Head of caudate nucleus (tissue), 42 donors: ENCODE measurements at regions of chr18 and their contacts with region 1.

Region 1: GRCh38 chr18:58043491-58044379 is at the start of gene NEDD4L:
- DNase-seq: peak; percentile 71 to 95 (median 86)

Region 2: DNA sequence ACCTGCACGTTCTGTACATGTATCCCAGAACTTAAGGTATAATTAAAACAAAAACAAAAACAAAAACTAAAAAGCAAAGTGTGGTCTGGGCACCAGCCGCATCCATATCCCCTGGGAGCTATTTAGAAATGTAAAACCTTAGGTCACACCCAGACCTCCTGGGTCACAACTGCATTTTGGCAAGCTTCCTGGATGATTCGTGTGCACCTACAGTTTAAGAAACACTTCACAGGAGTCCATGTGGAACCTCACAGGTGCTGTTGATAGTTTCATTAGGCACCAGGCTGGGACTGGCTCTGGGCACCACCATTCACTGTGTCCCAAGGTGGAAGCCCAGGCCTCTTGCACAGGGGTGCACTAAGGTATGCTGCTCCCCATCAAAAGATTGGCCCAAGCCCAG is 1000.5 kb before region 1 on chr18:
- intact Hi-C with region 1: no loop called
- DNase-seq: no peak

Region 3: DNA sequence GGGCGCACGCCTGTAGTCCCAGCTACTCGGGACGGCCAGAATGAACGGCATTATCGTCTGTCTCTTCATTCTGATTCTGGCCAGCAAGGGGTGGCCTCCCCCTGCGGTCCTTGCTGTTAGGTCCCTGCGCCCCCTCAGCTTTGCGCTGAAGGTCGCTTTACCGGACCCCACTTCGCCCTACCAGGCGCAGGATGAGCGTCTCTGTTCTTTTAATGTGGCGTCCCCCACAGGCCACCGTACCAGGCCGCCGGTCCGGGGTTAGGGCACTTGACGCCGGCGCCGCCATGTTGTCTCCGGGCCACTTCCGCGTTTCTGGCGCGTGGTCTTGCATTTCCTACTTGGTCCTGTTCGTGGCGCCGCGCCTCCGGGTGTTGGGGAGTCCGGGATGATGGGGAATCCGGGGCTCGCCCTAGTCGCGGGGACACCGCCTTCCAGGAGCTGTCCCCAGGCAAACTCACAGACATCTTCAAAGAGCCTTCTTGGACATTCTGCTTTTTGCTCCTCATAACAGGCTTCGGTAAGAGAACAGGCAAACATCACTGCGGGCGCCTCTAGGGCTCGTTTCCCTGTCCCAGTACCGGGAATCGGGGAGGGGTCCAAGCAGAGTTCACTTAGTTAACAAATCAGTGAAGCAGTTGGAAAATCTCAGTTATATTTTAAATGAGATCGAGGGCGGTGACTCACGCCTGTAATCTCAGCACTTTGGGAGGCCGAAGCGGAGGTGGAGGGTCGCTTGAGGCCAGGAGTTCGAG is 413.6 kb before region 1 on chr18:
- intact Hi-C with region 1: loop called (anchors 5 kb)
- DNase-seq: peak; percentile 93 to 99 (median 97)

Region 4: GRCh38 chr18:58124475-58124874 is 80.7 kb after region 1 on chr18:
- intact Hi-C with region 1: loop called (anchors 5 kb)
- DNase-seq: no peak

Region 5: GRCh38 chr18:58135701-58136331 is 92.1 kb after region 1 on chr18:
- intact Hi-C with region 1: loop called (anchors 5 kb)
- DNase-seq: peak in 41 of 42 donors; percentile 16 to 90 (median 66)

Region 6: DNA sequence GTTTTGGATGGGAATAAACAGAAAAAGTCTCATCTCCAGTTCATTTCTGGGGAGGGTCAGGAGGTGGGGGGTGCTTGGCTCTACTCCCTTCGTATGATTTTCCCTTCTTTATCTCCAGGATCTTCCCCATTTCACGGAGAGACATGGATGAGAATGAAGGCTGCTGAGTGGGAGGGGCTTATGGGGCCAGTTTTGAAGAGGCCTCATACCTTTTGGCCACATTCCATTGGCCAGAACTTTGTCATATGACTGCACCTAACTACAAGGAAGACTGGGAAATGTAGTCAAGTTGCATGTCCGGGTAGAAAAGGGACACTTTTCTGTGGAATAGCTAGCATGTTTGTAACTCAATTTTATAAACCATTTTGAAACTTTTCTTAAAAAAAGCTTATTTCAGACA is 117.9 kb after region 1 on chr18:
- intact Hi-C with region 1: no loop called
- DNase-seq: no peak

Region 7: GRCh38 chr18:58303363-58303762 is 259.6 kb after region 1 on chr18:
- intact Hi-C with region 1: loop called (anchors 10 kb)
- DNase-seq: no peak